ENCODE measurements at regions of chr9 and their contacts with region 1.

Region 1: DNA sequence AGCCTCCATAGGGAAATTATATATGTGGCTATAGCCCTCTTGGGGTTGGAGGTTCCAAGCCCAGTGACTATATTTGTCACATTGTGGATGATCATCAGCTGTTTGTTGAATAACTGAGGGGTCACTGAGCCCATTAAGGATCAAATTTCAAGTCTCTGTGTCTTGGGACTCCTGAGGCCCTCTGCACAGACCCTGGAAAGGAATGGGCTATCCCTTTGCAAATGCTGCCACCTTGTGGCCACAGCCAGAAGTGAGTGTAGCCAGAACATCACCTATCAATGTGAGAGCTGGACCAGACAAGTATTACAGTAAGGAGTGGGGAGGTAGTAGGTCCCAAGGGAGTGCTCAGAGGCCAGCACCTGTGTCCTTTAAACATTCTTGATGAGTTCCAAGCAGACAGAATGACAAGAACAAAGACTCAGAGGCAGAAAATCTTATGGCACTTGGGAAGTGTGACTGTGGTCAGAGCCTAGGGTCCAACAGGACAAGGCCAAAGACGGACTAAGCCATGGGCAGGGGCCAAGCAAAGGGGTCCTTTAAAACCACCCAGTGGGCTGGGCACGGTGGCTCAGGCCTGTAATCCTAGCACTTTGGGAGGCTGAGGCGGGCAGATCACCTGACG is 8.2 kb downstream of the RPP25L start:
- DNase-seq: peak; percentile 77
- H3K4me3 ChIP-seq: no peak overlapping the region
- H3K27ac ChIP-seq: no peak overlapping the region
- H3K4me1 ChIP-seq: peaks cover 7% of the 10 kb centered on the region
- H3K27me3 ChIP-seq: no peaks in the 10 kb centered on the region
- CTCF ChIP-seq: peak; percentile 95

Region 2: DNA sequence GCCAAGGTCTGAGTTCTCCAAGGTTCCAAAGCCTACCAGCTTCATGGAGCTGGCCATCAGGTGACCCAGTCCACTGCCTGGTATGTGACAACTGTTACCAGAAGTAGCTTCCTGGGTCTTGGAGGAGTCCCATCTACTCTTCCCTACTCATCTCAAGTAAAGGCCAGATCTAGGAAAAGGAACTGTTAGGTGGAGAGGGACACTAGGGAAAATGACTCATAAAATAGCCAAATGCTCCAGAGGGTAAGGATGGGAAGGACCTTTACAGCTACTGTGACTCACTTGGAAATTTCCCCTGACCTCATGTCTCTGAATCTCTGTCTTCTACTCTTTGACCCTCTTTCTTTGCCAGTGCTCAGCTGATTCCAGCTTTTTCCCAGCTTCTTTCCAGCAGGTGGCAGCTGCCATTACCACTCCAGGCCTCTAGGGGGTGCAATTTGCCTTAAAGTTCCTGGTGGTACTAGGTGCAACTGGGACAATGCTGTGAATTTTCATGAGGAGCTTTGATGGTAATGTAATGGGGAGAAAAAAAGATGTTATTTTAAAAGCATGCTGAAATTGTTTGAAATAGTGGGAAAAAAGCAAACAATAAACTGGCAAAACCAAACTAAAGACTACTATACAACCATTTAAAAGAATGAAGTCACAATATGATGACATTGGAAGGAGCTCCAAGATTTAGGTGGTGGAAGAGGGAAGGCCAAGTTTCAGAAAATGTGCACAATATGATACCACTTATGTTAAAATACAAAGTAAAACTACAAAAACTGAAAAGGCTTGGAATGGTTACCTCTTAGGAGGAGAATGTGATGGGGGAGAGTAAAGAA is 200.0 kb before region 1 on chr9:
- intact Hi-C with region 1: loop called (anchors 10 kb)
- DNase-seq: peak; percentile 59
- H3K4me3 ChIP-seq: no peak overlapping the region
- H3K27ac ChIP-seq: no peak overlapping the region
- H3K4me1 ChIP-seq: peaks cover 5% of the 10 kb centered on the region
- H3K27me3 ChIP-seq: no peaks in the 10 kb centered on the region
- CTCF ChIP-seq: peak; percentile 96

Region 3: GRCh38 chr9:34492051-34492450 is 111.7 kb before region 1 on chr9:
- intact Hi-C with region 1: no loop called
- DNase-seq: no peak
- H3K4me3 ChIP-seq: no peak overlapping the region
- H3K27ac ChIP-seq: no peak overlapping the region
- H3K4me1 ChIP-seq: no peaks in the 10 kb centered on the region
- H3K27me3 ChIP-seq: peaks cover 29% of the 10 kb centered on the region
- CTCF ChIP-seq: no peak

Measured in left ventricle myocardium inferior (tissue), 1 donor.